CD14-positive monocyte (primary cell): ENCODE measurements at regions of chr13 and their contacts with region 1.

Region 1: DNA sequence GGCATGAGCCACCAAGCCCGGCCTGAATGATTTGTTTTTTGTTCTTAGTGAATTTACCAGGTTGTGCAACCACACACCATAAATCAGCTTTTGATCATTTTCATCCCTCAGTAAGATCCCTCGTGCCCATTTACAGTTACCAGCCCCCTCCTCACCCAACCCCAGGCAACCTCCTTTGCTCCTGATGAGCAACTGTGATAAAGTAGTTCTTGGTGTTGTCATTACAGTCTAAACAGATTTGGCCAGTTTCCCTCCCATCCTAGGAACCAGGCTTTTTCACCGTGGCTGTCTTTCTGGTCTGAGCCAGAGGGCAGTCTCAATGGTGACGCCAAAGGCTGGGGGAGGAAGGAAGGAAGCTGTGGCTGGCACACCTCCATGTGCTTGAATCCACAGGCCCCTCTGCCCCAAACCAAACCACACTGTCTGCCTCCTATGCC is 61.2 kb upstream of the WDFY2 start:
- DNase-seq: peak in 2 of 3 donors; percentile 29 to 31
- H3K4me3 ChIP-seq: peak overlapping the region in 1 of 3 experiments; percentile 2
- H3K4me3 Mint-ChIP-seq: peak overlapping the region in 1 of 2 donors; percentile 16
- H3K27ac ChIP-seq: peak overlapping the region in 1 of 2 donors; percentile 22
- H3K27ac Mint-ChIP-seq: peak overlapping the region in 4 of 7 donors; percentile 52 to 77 (median 76)
- H3K4me1 ChIP-seq: peaks cover 18 to 20% of the 10 kb centered on the region in 2 donors
- H3K4me1 Mint-ChIP-seq: peaks cover 19% of the 10 kb centered on the region
- H3K27me3 ChIP-seq: no peaks in the 10 kb centered on the region
- H3K27me3 Mint-ChIP-seq: peaks cover 0 to 4% (median 1%) of the 10 kb centered on the region in 3 donors
- CTCF ChIP-seq: no peak

Region 2: GRCh38 chr13:51167393-51168191 is 355.5 kb before region 1 on chr13:
- intact Hi-C with region 1: no loop called
- DNase-seq: no peak
- H3K4me3 ChIP-seq: no peak overlapping the region
- H3K4me3 Mint-ChIP-seq: no peak overlapping the region
- H3K27ac ChIP-seq: no peak overlapping the region
- H3K27ac Mint-ChIP-seq: no peak overlapping the region
- H3K4me1 ChIP-seq: no peaks in the 10 kb centered on the region
- H3K4me1 Mint-ChIP-seq: no peaks in the 10 kb centered on the region
- H3K27me3 ChIP-seq: no peaks in the 10 kb centered on the region
- H3K27me3 Mint-ChIP-seq: peaks cover 7 to 23% (median 22%) of the 10 kb centered on the region in 3 donors
- CTCF ChIP-seq: no peak

Region 3: DNA sequence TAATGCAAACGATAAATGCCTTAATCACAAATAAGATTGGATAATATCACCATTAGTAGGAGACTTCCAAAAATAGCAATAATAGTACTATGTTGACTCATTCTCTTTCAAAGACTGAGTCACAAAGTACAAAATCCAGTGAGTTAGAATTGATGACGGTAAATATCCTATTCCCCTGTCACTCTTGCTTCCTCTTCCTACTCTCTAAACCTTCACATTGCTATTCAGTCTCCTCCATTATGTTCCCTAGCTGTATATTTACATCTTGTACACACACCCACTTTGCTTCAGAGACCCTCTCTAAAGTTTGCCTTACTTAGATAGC is 43.9 kb before region 1 on chr13:
- intact Hi-C with region 1: no loop called
- DNase-seq: peak; percentile 20 to 55 (median 40)
- H3K4me3 ChIP-seq: no peak overlapping the region
- H3K4me3 Mint-ChIP-seq: no peak overlapping the region
- H3K27ac ChIP-seq: no peak overlapping the region
- H3K27ac Mint-ChIP-seq: no peak overlapping the region
- H3K4me1 ChIP-seq: no peaks in the 10 kb centered on the region
- H3K4me1 Mint-ChIP-seq: no peaks in the 10 kb centered on the region
- H3K27me3 ChIP-seq: no peaks in the 10 kb centered on the region
- H3K27me3 Mint-ChIP-seq: no peaks in the 10 kb centered on the region
- CTCF ChIP-seq: no peak

Region 4: GRCh38 chr13:51557875-51558612 is 34.9 kb after region 1 on chr13:
- intact Hi-C with region 1: loop called in 1 of 2 experiments (anchors 5 kb)
- DNase-seq: peak; percentile 32 to 64 (median 45)
- H3K4me3 ChIP-seq: peak overlapping the region in 1 of 3 experiments; percentile 4
- H3K4me3 Mint-ChIP-seq: peak overlapping the region in 1 of 2 donors; percentile 67
- H3K27ac ChIP-seq: no peak overlapping the region
- H3K27ac Mint-ChIP-seq: peak overlapping the region in 6 of 7 donors; percentile 25 to 85 (median 68)
- H3K4me1 ChIP-seq: peaks cover 71 to 73% of the 10 kb centered on the region in 2 donors
- H3K4me1 Mint-ChIP-seq: peaks cover 70% of the 10 kb centered on the region
- H3K27me3 ChIP-seq: no peaks in the 10 kb centered on the region
- H3K27me3 Mint-ChIP-seq: no peaks in the 10 kb centered on the region
- CTCF ChIP-seq: no peak